ENCODE measurements at regions of chr7 and their contacts with region 1.

Region 1: DNA sequence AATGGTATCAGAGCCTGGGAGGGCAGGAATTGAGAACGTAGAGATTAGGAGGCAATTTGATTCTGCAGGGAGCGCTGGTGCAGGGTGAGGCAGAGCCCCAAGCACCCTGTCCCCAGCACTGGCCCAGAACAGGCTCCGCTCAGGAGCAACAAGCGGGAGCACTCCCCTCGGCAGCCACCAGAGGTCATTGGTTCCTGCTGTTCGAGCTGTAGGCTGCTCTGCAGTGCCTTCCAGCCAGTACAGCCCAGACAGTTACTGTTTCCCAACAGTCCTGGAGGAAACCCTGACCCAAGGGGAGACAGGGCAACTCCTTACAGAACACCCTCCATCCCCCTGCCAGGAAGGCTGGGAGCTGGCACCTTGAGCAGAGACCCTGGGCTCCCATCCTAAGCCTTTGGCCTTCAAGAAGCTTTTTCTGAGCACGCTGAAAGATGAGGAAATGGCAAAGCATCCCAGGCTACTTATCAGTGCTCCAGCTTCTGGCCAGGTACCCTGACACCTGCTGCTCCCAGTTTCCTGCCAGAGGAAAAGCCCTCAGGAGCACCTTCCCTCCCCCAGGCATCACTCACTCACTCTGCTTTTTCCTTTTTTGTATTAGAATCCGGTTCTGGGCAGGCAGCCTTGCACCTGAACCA is 71.2 kb upstream of the EFCAB10 start:
- DNase-seq: peak; percentile 26 to 69 (median 51)
- H3K4me3 ChIP-seq: no peak overlapping the region
- H3K4me3 Mint-ChIP-seq: no peak overlapping the region
- H3K27ac ChIP-seq: no peak overlapping the region
- H3K27ac Mint-ChIP-seq: peak overlapping the region in 1 of 8 donors; percentile 83
- H3K4me1 ChIP-seq: no peaks in the 10 kb centered on the region
- H3K4me1 Mint-ChIP-seq: peaks cover 14 to 28% (median 17%) of the 10 kb centered on the region in 3 donors
- H3K27me3 ChIP-seq: no peaks in the 10 kb centered on the region
- H3K27me3 Mint-ChIP-seq: peaks cover 0 to 4% of the 10 kb centered on the region in 2 donors

Region 2: GRCh38 chr7:105672801-105673200 is 20.3 kb after region 1 on chr7:
- CTCF ChIA-PET with region 1: interaction called, 18 read pairs
- POLR2A ChIA-PET with region 1: no interaction called
- DNase-seq: no peak
- H3K4me3 ChIP-seq: no peak overlapping the region
- H3K4me3 Mint-ChIP-seq: peak overlapping the region in 1 of 7 donors; percentile 37
- H3K27ac ChIP-seq: no peak overlapping the region
- H3K27ac Mint-ChIP-seq: peak overlapping the region in 6 of 8 donors; percentile 42 to 95 (median 60)
- H3K4me1 ChIP-seq: peaks cover 43% of the 10 kb centered on the region
- H3K4me1 Mint-ChIP-seq: peaks cover 42 to 62% (median 61%) of the 10 kb centered on the region in 3 donors
- H3K27me3 ChIP-seq: no peaks in the 10 kb centered on the region
- H3K27me3 Mint-ChIP-seq: no peaks in the 10 kb centered on the region

Region 3: GRCh38 chr7:105677817-105678585 is 25.5 kb after region 1 on chr7:
- CTCF ChIA-PET with region 1: interaction called, 11 read pairs
- POLR2A ChIA-PET with region 1: no interaction called
- DNase-seq: peak; percentile 51 to 82 (median 53)
- H3K4me3 ChIP-seq: peak overlapping the region; percentile 18
- H3K4me3 Mint-ChIP-seq: peak overlapping the region; percentile 25 to 89 (median 76)
- H3K27ac ChIP-seq: peak overlapping the region; percentile 49
- H3K27ac Mint-ChIP-seq: peak overlapping the region; percentile 93 to 99 (median 96)
- H3K4me1 ChIP-seq: peaks cover 59% of the 10 kb centered on the region
- H3K4me1 Mint-ChIP-seq: peaks cover 62 to 86% (median 84%) of the 10 kb centered on the region in 3 donors
- H3K27me3 ChIP-seq: no peaks in the 10 kb centered on the region
- H3K27me3 Mint-ChIP-seq: no peaks in the 10 kb centered on the region

Region 4: DNA sequence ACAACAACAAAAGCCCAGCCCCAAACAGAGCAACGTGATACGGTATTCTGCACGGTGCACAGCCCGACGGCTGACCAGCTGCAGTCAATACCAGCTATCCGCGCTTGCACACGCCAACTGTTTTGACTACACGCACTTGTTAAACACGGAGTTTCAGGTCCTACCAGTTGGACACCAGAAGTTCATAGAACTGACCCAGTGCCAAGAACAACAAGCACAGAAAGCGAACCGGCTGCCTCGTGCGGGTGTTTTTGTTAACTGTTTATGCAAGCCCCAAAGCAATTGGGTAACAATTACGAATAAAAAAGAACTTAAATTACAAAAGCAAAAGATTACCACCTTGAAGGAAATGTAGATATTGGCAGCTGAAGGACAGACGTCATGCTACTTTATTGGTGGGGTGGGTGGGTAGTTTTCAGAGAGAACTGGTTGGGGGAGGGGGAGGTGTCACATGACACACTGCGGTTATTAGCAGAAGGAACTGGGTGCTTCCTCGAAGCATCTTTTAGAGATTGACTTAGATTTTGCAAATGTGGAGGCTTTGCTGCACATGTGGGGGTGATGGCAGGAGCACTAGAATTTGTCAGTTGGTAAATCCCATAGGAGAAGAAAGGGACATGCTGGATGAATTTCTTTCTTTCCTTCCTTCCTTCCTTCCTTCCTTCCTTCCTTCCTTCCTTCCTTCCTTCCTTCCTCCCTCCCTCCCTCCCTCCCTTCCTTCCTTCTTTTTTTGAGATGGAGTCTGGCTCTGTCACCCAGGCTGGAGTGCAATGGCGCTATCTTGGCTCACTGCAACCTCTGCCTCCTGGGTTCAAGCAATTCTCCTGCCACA is 39.5 kb after region 1 on chr7:
- CTCF ChIA-PET with region 1: interaction called, 20 read pairs
- POLR2A ChIA-PET with region 1: interaction called, 3 read pairs
- DNase-seq: peak; percentile 63 to 85 (median 80)
- H3K4me3 ChIP-seq: peak overlapping the region; percentile 87
- H3K4me3 Mint-ChIP-seq: peak overlapping the region; percentile 90 to 97 (median 95)
- H3K27ac ChIP-seq: peak overlapping the region; percentile 89
- H3K27ac Mint-ChIP-seq: peak overlapping the region; percentile 94 to 99 (median 97)
- H3K4me1 ChIP-seq: peaks cover 26% of the 10 kb centered on the region
- H3K4me1 Mint-ChIP-seq: peaks cover 51 to 71% (median 69%) of the 10 kb centered on the region in 3 donors
- H3K27me3 ChIP-seq: no peaks in the 10 kb centered on the region
- H3K27me3 Mint-ChIP-seq: peaks cover 0 to 1% of the 10 kb centered on the region in 2 donors

Region 5: GRCh38 chr7:105743351-105744090 is 91.0 kb after region 1 on chr7:
- CTCF ChIA-PET with region 1: interaction called, 10 read pairs
- POLR2A ChIA-PET with region 1: no interaction called
- DNase-seq: no peak
- H3K4me3 ChIP-seq: no peak overlapping the region
- H3K4me3 Mint-ChIP-seq: peak overlapping the region in 1 of 7 donors; percentile 34
- H3K27ac ChIP-seq: no peak overlapping the region
- H3K27ac Mint-ChIP-seq: no peak overlapping the region
- H3K4me1 ChIP-seq: no peaks in the 10 kb centered on the region
- H3K4me1 Mint-ChIP-seq: peaks cover 13 to 30% (median 24%) of the 10 kb centered on the region in 3 donors
- H3K27me3 ChIP-seq: no peaks in the 10 kb centered on the region
- H3K27me3 Mint-ChIP-seq: peaks cover 0 to 1% of the 10 kb centered on the region in 2 donors

Region 6: DNA sequence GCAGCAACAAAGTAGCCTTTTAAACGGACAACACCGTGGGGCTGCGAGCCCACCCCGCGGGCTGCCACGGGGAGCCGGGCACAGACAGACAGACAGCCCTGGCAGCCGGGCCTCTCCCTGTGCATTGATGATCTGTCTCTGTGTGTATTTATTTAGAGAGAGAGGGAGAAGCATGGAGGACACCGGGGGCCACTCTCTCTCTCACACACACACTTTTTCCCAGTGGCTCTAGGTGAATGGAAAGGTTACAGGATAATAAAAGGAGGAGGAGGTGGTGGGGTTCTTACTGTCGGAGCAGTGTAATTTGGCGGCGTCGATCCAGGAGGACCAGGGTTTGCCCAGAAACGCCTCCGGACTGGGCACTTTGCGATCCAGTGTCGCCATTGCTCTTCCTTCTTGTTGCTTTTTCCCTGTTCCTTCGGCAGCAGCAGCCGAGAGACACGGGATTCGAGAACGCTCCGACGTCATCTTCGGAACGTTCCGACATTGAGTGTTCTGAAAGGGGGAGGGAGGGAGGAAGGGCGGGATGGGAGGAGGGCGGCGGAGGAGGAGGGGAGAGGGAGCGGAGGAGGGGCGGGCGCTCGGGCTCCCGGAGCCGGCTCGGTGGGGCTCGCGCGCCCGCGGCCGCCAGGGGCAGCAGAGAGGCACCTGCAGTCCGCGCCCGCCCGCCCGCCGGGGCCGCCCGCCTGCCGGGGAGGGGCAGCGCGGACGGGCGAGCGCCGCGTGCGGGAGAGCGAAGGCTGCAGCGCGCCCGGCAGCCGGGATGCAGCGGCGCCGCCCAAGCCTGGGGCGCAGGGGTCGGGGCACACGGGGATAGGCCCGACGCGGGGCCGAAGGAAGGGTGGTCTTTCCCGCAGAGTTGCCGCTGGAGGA is 223.9 kb after region 1 on chr7 and contains the start of gene ATXN7L1:
- CTCF ChIA-PET with region 1: interaction called, 10 read pairs
- POLR2A ChIA-PET with region 1: no interaction called
- DNase-seq: peak; percentile 84 to 90 (median 87)
- H3K4me3 ChIP-seq: peak within 1 kb of the TSS; percentile 91
- H3K4me3 Mint-ChIP-seq: peak within 1 kb of the TSS; percentile 96 to 100 (median 98)
- H3K27ac ChIP-seq: peak within 1 kb of the TSS; percentile 73
- H3K27ac Mint-ChIP-seq: peak within 1 kb of the TSS; percentile 80 to 99 (median 94)
- H3K4me1 ChIP-seq: peaks cover 46% of the 10 kb centered on the region
- H3K4me1 Mint-ChIP-seq: peaks cover 44 to 79% (median 79%) of the 10 kb centered on the region in 3 donors
- H3K27me3 ChIP-seq: no peaks in the 10 kb centered on the region
- H3K27me3 Mint-ChIP-seq: no peaks in the 10 kb centered on the region
- total RNA-seq, gene ATXN7L1: 9.0 to 9.7 TPM

Region 7: GRCh38 chr7:106041140-106041717 is 388.8 kb after region 1 on chr7:
- CTCF ChIA-PET with region 1: interaction called, 26 read pairs
- POLR2A ChIA-PET with region 1: no interaction called
- DNase-seq: peak in 2 of 5 donors; percentile 10 to 29
- H3K4me3 ChIP-seq: no peak overlapping the region
- H3K4me3 Mint-ChIP-seq: no peak overlapping the region
- H3K27ac ChIP-seq: no peak overlapping the region
- H3K27ac Mint-ChIP-seq: peak overlapping the region in 3 of 8 donors; percentile 6 to 14 (median 8)
- H3K4me1 ChIP-seq: peaks cover 30% of the 10 kb centered on the region
- H3K4me1 Mint-ChIP-seq: peaks cover 15 to 31% (median 30%) of the 10 kb centered on the region in 3 donors
- H3K27me3 ChIP-seq: no peaks in the 10 kb centered on the region
- H3K27me3 Mint-ChIP-seq: peaks cover 2 to 11% of the 10 kb centered on the region in 2 donors

Measured in CD8-positive, alpha-beta memory T cell (primary cell).